Sigmoid colon (tissue), 7 donors: ENCODE measurements at regions of chr19 and their contacts with region 1.

Region 1: DNA sequence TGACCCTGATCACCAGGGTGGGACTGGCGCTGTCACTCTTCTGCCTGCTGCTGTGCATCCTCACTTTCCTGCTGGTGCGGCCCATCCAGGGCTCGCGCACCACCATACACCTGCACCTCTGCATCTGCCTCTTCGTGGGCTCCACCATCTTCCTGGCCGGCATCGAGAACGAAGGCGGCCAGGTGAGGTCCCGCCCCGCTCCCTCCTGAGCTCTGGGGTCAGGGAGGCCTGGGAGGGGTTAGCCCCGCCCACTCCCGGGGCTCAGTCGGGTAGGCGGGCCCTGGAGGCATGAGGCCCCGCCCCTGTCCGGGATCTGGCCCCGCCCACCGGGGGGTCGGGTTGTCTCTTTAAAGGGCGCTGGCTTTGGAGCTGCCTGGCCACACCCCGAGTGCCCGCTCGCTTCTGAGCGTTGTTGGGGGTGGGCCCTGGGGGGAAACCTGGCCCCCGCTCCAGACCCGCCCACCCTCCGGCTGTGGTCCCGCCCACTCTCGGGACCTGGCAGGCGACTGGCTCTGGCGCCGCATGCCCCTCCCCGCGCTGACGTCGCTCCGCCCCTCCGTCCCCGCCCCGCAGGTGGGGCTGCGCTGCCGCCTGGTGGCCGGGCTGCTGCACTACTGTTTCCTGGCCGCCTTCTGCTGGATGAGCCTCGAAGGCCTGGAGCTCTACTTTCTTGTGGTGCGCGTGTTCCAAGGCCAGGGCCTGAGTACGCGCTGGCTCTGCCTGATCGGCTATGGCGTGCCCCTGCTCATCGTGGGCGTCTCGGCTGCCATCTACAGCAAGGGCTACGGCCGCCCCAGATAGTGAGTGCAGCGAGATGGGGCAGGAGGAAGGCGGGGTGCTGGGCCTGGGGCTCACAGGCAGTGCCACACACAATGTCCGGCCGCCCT is 13.1 kb downstream of the DDX39A start:
- DNase-seq: peak; percentile 93
- H3K4me3 ChIP-seq: peak overlapping the region; percentile 8 to 36 (median 24)
- H3K27ac ChIP-seq: peak overlapping the region; percentile 65 to 82 (median 76)
- H3K4me1 ChIP-seq: peaks cover 0 to 16% (median 9%) of the 10 kb centered on the region in 4 donors
- H3K27me3 ChIP-seq: no peaks in the 10 kb centered on the region
- CTCF ChIP-seq: peak; percentile 84 to 93 (median 90)
- EP300 ChIP-seq: no peak
- POLR2A ChIP-seq: no peak

Region 2: GRCh38 chr19:14136509-14137281 is 269.3 kb before region 1 on chr19 and contains the start of gene ASF1B:
- intact Hi-C with region 1: loop called (anchors 2 kb)
- DNase-seq: peak; percentile 100
- H3K4me3 ChIP-seq: peak within 1 kb of the TSS; percentile 65 to 88 (median 76)
- H3K27ac ChIP-seq: peak within 1 kb of the TSS; percentile 95 to 98 (median 96)
- H3K4me1 ChIP-seq: peaks cover 0 to 28% (median 27%) of the 10 kb centered on the region in 4 donors
- H3K27me3 ChIP-seq: no peaks in the 10 kb centered on the region
- CTCF ChIP-seq: peak; percentile 66 to 92 (median 76)
- EP300 ChIP-seq: no peak
- POLR2A ChIP-seq: peak; percentile 14 to 72
- total RNA-seq, gene ASF1B: 1.1 to 2.0 (median 1.4) TPM in 3 of 4 donors, not detected in the other

Region 3: DNA sequence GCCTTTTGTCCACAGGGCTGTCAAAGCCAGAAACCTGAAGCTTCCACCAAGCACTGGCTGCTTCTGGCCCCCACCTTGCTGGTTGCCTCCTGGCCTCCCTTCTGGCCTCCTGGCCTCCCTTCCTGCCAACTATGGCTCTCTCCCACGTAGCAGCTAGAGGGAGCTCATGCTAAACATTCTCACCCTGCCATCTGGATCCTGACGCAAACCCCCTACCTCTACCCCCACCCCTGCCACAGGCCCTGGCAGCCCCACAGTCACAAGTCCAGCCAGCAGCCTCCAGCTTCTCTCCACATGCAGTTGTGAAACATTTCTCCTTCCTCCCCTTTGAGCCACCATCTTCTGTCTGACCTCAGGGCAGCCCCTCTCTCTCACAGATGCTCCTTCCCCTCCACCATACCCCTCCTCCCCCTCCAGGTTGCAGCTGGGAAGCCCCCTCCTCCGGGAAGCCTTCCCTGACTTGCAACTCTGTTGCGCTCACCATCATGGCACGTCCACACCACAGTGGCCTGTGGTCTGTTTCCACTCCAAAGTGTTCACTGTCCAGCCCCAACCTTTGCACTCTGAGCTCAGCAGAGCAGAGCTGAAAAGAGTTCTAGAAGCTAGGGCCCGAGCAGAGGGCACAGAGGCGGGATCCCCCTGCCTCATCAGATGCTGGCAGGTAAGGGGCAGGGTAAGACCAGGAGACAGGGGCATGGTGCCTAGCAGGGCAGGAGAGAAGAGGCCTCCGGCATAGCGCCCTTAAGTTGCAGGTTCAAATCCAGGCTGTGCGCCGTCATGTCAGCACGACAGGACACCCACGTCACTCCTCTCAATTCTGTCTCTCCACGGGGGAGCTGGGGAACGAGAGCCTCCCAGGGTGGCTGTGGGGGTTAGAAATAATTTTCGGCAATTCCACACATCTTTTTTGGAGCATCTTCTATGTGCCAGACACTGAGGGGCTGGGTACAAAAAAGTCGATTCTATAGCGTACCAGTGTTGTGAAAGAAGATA is 207.3 kb before region 1 on chr19:
- intact Hi-C with region 1: loop called (anchors 10 kb)
- DNase-seq: no peak
- H3K4me3 ChIP-seq: no peak overlapping the region
- H3K27ac ChIP-seq: no peak overlapping the region
- H3K4me1 ChIP-seq: peaks cover 0 to 42% (median 24%) of the 10 kb centered on the region in 4 donors
- H3K27me3 ChIP-seq: no peaks in the 10 kb centered on the region
- CTCF ChIP-seq: no peak
- EP300 ChIP-seq: no peak
- POLR2A ChIP-seq: no peak

Region 4: DNA sequence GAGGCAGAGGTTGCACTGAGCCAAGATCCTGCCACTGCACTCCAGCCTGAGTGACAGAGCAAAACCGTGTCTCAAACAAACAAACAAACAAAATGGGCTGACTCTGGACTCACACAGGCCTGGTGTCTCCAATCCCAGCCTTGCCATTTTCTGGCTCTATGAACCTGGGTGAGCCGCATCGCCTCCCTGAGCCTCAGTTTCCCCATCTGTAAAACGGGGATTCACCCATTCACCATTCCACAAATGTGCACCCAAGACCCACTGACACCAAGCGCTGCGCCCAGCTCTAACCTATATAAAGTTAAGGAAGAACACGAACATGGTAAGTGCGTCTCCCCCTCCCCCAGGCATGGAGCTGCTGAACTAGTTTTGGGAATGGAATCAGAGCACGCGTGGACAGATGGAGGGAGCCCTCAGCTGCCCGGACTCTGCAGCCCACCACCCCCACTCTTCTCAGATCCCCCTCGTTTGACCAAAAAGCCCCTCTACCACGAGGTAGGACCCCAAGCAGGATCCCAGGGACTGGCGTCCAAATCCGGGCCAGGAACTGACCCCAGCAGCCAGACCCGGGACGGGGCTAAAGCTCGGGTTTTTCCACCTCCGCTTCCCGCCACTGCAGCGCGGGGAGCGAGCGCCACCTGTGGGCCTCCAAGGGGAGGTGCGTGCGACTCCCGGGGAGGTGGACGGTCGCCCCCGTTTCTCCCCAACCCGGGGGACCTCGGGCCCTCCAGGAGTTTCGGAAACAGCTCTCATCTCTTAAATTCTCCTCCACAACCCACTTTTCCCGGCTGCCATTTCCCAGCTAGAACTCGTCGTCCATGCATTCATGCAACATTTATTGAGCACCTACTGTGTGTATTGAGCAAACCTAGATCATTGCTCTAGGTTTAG is 57.8 kb before region 1 on chr19:
- intact Hi-C with region 1: loop called (anchors 5 kb)
- DNase-seq: peak; percentile 77
- H3K4me3 ChIP-seq: peak overlapping the region in 3 of 4 donors; percentile 25 to 40 (median 35)
- H3K27ac ChIP-seq: no peak overlapping the region
- H3K4me1 ChIP-seq: peaks cover 0 to 10% (median 2%) of the 10 kb centered on the region in 4 donors
- H3K27me3 ChIP-seq: peaks cover 0 to 4% (median 0%) of the 10 kb centered on the region in 3 donors
- CTCF ChIP-seq: peak; percentile 84 to 97 (median 92)
- EP300 ChIP-seq: no peak
- POLR2A ChIP-seq: no peak

Region 5: GRCh38 chr19:14361824-14362223 is 44.2 kb before region 1 on chr19:
- intact Hi-C with region 1: loop called (anchors 2 kb)
- DNase-seq: no peak
- H3K4me3 ChIP-seq: no peak overlapping the region
- H3K27ac ChIP-seq: peak overlapping the region in 1 of 4 donors; percentile 18
- H3K4me1 ChIP-seq: peaks cover 0 to 21% (median 14%) of the 10 kb centered on the region in 4 donors
- H3K27me3 ChIP-seq: no peaks in the 10 kb centered on the region
- CTCF ChIP-seq: peak in 1 of 4 experiments; percentile 11
- EP300 ChIP-seq: no peak
- POLR2A ChIP-seq: no peak

Region 6: GRCh38 chr19:14381689-14382474 is 24.1 kb before region 1 on chr19:
- intact Hi-C with region 1: loop called (anchors 2 kb)
- DNase-seq: peak; percentile 77
- H3K4me3 ChIP-seq: peak overlapping the region; percentile 46 to 72 (median 62)
- H3K27ac ChIP-seq: peak overlapping the region; percentile 85 to 90 (median 90)
- H3K4me1 ChIP-seq: peaks cover 2 to 63% (median 56%) of the 10 kb centered on the region in 4 donors
- H3K27me3 ChIP-seq: no peaks in the 10 kb centered on the region
- CTCF ChIP-seq: no peak
- EP300 ChIP-seq: no peak
- POLR2A ChIP-seq: no peak